ENCODE measurements at regions of chr12 and their contacts with region 1.

Region 1: DNA sequence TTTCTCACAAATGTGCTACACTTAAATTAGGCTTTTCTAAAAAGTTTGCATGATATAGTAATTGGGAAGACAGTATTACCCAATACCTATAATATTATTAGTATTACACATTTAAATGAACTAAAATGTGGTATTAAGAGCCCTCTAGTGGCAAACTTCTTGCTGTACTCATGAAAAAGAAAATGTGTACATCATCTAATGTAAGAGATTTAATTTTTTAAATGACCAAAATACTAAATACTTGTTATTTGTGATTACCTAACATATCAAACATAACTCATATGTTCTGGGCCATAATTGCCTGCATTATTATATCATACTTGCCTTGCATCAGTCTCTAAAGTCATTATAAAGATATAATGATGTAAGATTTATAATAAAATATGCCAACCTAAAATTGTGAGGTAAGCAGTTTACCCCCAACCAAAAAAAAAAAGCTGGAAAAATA is 64.2 kb downstream of the DNAI7 start:
- DNase-seq: no peak
- H3K4me3 Mint-ChIP-seq: no peak overlapping the region
- H3K27ac Mint-ChIP-seq: no peak overlapping the region
- H3K4me1 Mint-ChIP-seq: no peaks in the 10 kb centered on the region
- H3K27me3 Mint-ChIP-seq: peaks cover under 1% of the 10 kb centered on the region

Region 2: GRCh38 chr12:23204933-23205778 is 1925.6 kb before region 1 on chr12:
- CTCF ChIA-PET with region 1: no interaction called
- intact Hi-C with region 1: loop called (anchors 5 kb)
- DNase-seq: peak; percentile 13
- H3K4me3 Mint-ChIP-seq: no peak overlapping the region
- H3K27ac Mint-ChIP-seq: no peak overlapping the region
- H3K4me1 Mint-ChIP-seq: no peaks in the 10 kb centered on the region
- H3K27me3 Mint-ChIP-seq: peaks cover 5% of the 10 kb centered on the region

Region 3: GRCh38 chr12:24852420-24852819 is 278.3 kb before region 1 on chr12:
- CTCF ChIA-PET with region 1: interaction called, 5 read pairs
- intact Hi-C with region 1: loop called (anchors 1 kb)
- DNase-seq: no peak
- H3K4me3 Mint-ChIP-seq: no peak overlapping the region
- H3K27ac Mint-ChIP-seq: no peak overlapping the region
- H3K4me1 Mint-ChIP-seq: peaks cover 17% of the 10 kb centered on the region
- H3K27me3 Mint-ChIP-seq: peaks cover 20% of the 10 kb centered on the region

Region 4: GRCh38 chr12:24960222-24960855 is 170.4 kb before region 1 on chr12:
- CTCF ChIA-PET with region 1: interaction called, 3 read pairs
- intact Hi-C with region 1: loop called (anchors 1 kb)
- DNase-seq: peak; percentile 76
- H3K4me3 Mint-ChIP-seq: no peak overlapping the region
- H3K27ac Mint-ChIP-seq: no peak overlapping the region
- H3K4me1 Mint-ChIP-seq: peaks cover 23% of the 10 kb centered on the region
- H3K27me3 Mint-ChIP-seq: peaks cover 17% of the 10 kb centered on the region

Region 5: GRCh38 chr12:24997970-24998582 is 132.7 kb before region 1 on chr12:
- CTCF ChIA-PET with region 1: interaction called, 84 read pairs
- intact Hi-C with region 1: no loop called
- DNase-seq: peak; percentile 20
- H3K4me3 Mint-ChIP-seq: no peak overlapping the region
- H3K27ac Mint-ChIP-seq: peak overlapping the region; percentile 75
- H3K4me1 Mint-ChIP-seq: peaks cover 36% of the 10 kb centered on the region
- H3K27me3 Mint-ChIP-seq: no peaks in the 10 kb centered on the region

Region 6: GRCh38 chr12:25119020-25119419 is 11.7 kb before region 1 on chr12:
- CTCF ChIA-PET with region 1: interaction called, 5 read pairs
- intact Hi-C with region 1: loop called (anchors 1 kb)
- DNase-seq: no peak
- H3K4me3 Mint-ChIP-seq: no peak overlapping the region
- H3K27ac Mint-ChIP-seq: no peak overlapping the region
- H3K4me1 Mint-ChIP-seq: peaks cover 6% of the 10 kb centered on the region
- H3K27me3 Mint-ChIP-seq: peaks cover 3% of the 10 kb centered on the region